B cell (primary cell): ENCODE measurements at regions of chr7 and their contacts with region 1.

Region 1: GRCh38 chr7:47991741-47992311 is 12.4 kb upstream of the HUS1 start:
- DNase-seq: peak; percentile 89
- ATAC-seq: peak; percentile 99
- H3K4me3 ChIP-seq: peak overlapping the region; percentile 39 to 86 (median 69)
- H3K4me3 Mint-ChIP-seq: peak overlapping the region; percentile 96
- H3K27ac ChIP-seq: peak overlapping the region; percentile 60 to 82
- H3K27ac Mint-ChIP-seq: peak overlapping the region; percentile 88
- H3K4me1 ChIP-seq: peaks cover 9 to 12% of the 10 kb centered on the region in 2 donors
- H3K4me1 Mint-ChIP-seq: peaks cover 12% of the 10 kb centered on the region
- H3K27me3 ChIP-seq: no peaks in the 10 kb centered on the region
- H3K27me3 Mint-ChIP-seq: no peaks in the 10 kb centered on the region
- CTCF ChIP-seq: peak; percentile 71

Region 2: DNA sequence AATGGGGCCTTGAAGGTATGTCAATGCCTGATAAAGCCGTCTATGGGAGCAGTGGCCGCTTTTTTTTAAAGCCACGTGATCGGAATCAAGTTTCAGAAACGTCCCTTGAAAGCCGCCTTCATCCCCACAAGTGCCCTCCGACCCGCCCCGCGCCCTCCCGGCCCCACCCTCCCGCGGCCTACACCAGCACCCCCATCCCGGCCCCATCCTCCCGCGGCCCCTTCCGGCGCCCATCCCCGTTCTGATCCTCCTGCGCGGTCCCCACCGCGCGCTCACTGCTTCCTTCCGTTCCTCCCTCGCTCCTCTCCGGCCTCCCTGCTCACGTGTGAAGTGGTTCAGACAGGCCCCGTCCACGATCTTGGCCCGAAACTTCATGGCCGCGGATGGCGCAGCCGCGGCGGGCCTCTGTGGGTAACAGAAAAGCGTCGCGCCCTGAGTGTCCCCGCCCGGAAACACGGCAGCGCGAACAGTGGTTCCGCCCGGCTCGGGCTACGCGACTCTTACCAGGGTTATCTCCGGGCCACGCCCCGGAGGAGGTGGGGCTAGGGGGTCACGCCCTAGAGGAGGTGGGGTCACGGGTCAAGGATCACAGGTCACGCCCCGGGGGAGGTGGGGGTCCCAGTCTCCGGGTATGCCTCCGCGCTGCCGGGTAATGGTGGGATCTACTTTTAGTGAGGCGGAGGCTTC is 12.5 kb before region 1 on chr7 and contains the start of gene HUS1:
- CTCF ChIA-PET with region 1: interaction called, 15 read pairs
- POLR2A ChIA-PET with region 1: interaction called, 3 read pairs
- intact Hi-C with region 1: loop called (anchors 1 kb)
- DNase-seq: peak; percentile 94
- ATAC-seq: peak; percentile 98
- H3K4me3 ChIP-seq: peak within 1 kb of the TSS; percentile 67 to 91 (median 71)
- H3K4me3 Mint-ChIP-seq: peak within 1 kb of the TSS; percentile 92
- H3K27ac ChIP-seq: peak within 1 kb of the TSS; percentile 91 to 93
- H3K27ac Mint-ChIP-seq: peak within 1 kb of the TSS; percentile 98
- H3K4me1 ChIP-seq: peaks cover 8 to 13% of the 10 kb centered on the region in 2 donors
- H3K4me1 Mint-ChIP-seq: peaks cover 22% of the 10 kb centered on the region
- H3K27me3 ChIP-seq: no peaks in the 10 kb centered on the region
- H3K27me3 Mint-ChIP-seq: no peaks in the 10 kb centered on the region
- CTCF ChIP-seq: no peak
- total RNA-seq, gene HUS1: 61.6 and 70.8 TPM in 2 replicates

Region 3: DNA sequence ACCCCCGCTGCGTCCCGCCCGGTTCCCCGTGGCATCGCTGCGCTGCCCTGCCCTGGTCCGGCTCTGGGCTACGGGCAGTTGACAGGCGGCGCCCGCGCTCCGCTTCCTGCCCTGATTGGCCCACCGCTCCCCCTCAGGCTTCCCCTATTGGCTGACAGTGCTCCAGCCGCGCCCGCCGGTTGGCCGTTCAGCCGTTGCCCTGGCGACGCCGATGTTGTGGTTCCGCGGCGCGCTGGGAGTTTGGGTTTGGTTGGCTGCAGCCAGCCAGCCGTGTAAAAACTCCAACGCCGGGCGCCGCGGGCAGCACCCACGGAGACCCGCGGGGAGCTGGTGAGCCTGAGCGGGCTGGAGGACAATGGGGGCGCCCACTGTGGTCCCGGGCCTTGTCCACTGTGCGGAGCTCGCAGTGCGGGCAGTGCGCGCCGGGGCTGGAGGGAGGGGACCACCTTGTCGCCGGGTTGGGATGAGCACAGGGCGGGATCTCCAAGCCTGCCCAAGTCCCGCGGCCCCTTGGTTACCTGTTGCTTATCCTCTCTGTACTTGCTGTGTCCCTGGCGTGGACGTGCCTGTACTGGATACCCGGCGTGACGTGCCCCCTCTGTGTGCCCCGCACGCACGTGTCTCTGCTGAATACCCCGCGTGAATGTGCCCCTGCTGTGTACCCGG is 43.6 kb after region 1 on chr7 and contains the start of gene C7orf57:
- CTCF ChIA-PET with region 1: interaction called, 6 read pairs
- POLR2A ChIA-PET with region 1: no interaction called
- intact Hi-C with region 1: loop called (anchors 1 kb)
- DNase-seq: peak; percentile 81
- ATAC-seq: peak; percentile 96
- H3K4me3 ChIP-seq: peak within 1 kb of the TSS; percentile 33 to 61 (median 44)
- H3K4me3 Mint-ChIP-seq: peak within 1 kb of the TSS; percentile 89
- H3K27ac ChIP-seq: no peak within 1 kb of the TSS
- H3K27ac Mint-ChIP-seq: peak within 1 kb of the TSS; percentile 8
- H3K4me1 ChIP-seq: peaks cover 14 to 15% of the 10 kb centered on the region in 2 donors
- H3K4me1 Mint-ChIP-seq: peaks cover 17% of the 10 kb centered on the region
- H3K27me3 ChIP-seq: peaks cover 0 to 40% (median 23%) of the 10 kb centered on the region in 4 experiments
- H3K27me3 Mint-ChIP-seq: peaks cover 38% of the 10 kb centered on the region
- CTCF ChIP-seq: no peak
- total RNA-seq, gene C7orf57: not detected in 2 replicates

Region 4: GRCh38 chr7:48398191-48398590 is 406.4 kb after region 1 on chr7:
- CTCF ChIA-PET with region 1: no interaction called
- POLR2A ChIA-PET with region 1: no interaction called
- intact Hi-C with region 1: no loop called
- DNase-seq: no peak
- ATAC-seq: no peak
- H3K4me3 ChIP-seq: no peak overlapping the region
- H3K4me3 Mint-ChIP-seq: no peak overlapping the region
- H3K27ac ChIP-seq: no peak overlapping the region
- H3K27ac Mint-ChIP-seq: no peak overlapping the region
- H3K4me1 ChIP-seq: no peaks in the 10 kb centered on the region
- H3K4me1 Mint-ChIP-seq: no peaks in the 10 kb centered on the region
- H3K27me3 ChIP-seq: no peaks in the 10 kb centered on the region
- H3K27me3 Mint-ChIP-seq: no peaks in the 10 kb centered on the region
- CTCF ChIP-seq: no peak